ENCODE measurements at regions of chr4 and their contacts with region 1.

Region 1: GRCh38 chr4:38759113-38759789 is 23.5 kb downstream of the TLR10 start:
- DNase-seq: peak; percentile 15 to 79
- H3K4me3 ChIP-seq: no peak overlapping the region
- H3K27ac ChIP-seq: no peak overlapping the region
- H3K4me1 ChIP-seq: no peaks in the 10 kb centered on the region
- H3K27me3 ChIP-seq: no peaks in the 10 kb centered on the region
- CTCF ChIP-seq: peak; percentile 49 to 74 (median 70)
- EP300 ChIP-seq: no peak
- POLR2A ChIP-seq: no peak
- RAD21 ChIP-seq: peak; percentile 84 to 87

Region 2: GRCh38 chr4:38743866-38744265 is 15.4 kb before region 1 on chr4:
- CTCF ChIA-PET with region 1: interaction called, 10 read pairs
- POLR2A ChIA-PET with region 1: no interaction called
- DNase-seq: no peak
- H3K4me3 ChIP-seq: no peak overlapping the region
- H3K27ac ChIP-seq: no peak overlapping the region
- H3K4me1 ChIP-seq: no peaks in the 10 kb centered on the region
- H3K27me3 ChIP-seq: no peaks in the 10 kb centered on the region
- CTCF ChIP-seq: no peak
- EP300 ChIP-seq: no peak
- POLR2A ChIP-seq: no peak
- RAD21 ChIP-seq: no peak

Region 3: GRCh38 chr4:38774181-38774955 is 15.1 kb after region 1 on chr4:
- CTCF ChIA-PET with region 1: interaction called, 136 read pairs
- POLR2A ChIA-PET with region 1: interaction called, 4 read pairs
- DNase-seq: no peak
- H3K4me3 ChIP-seq: no peak overlapping the region
- H3K27ac ChIP-seq: no peak overlapping the region
- H3K4me1 ChIP-seq: no peaks in the 10 kb centered on the region
- H3K27me3 ChIP-seq: no peaks in the 10 kb centered on the region
- CTCF ChIP-seq: no peak
- EP300 ChIP-seq: no peak
- POLR2A ChIP-seq: no peak
- RAD21 ChIP-seq: no peak

Region 4: GRCh38 chr4:38782452-38783108 is 23.3 kb after region 1 on chr4 and contains the start of gene TLR10:
- CTCF ChIA-PET with region 1: interaction called, 136 read pairs
- POLR2A ChIA-PET with region 1: no interaction called
- DNase-seq: no peak
- H3K4me3 ChIP-seq: no peak within 1 kb of the TSS
- H3K27ac ChIP-seq: no peak within 1 kb of the TSS
- H3K4me1 ChIP-seq: no peaks in the 10 kb centered on the region
- H3K27me3 ChIP-seq: no peaks in the 10 kb centered on the region
- CTCF ChIP-seq: peak; percentile 3 to 56 (median 49); a peak in 3 of 4 replicates
- EP300 ChIP-seq: no peak
- POLR2A ChIP-seq: no peak
- RAD21 ChIP-seq: peak; percentile 54 to 59
- total RNA-seq, gene TLR10: not detected in 2 replicates

Region 5: DNA sequence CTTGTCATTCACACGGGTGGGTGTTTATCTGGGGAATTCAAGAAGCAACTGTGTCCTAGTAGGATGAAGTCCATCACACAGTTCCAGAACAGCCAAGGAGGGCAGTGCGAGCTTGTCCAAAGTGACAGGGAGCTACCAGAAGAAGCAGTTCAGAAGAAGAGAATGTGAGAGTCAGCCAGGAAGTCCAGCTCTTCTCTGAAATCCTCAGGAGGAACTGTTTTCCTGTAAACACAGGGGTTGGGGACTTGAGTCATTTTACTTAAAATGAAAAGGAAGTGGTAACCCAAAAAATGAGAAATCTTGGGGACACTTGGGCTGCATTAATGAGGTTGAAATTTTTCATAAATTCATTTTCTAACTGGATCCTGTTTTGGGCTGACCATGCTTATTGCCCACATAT is 31.8 kb after region 1 on chr4:
- CTCF ChIA-PET with region 1: interaction called, 136 read pairs
- POLR2A ChIA-PET with region 1: no interaction called
- DNase-seq: no peak
- H3K4me3 ChIP-seq: no peak overlapping the region
- H3K27ac ChIP-seq: no peak overlapping the region
- H3K4me1 ChIP-seq: no peaks in the 10 kb centered on the region
- H3K27me3 ChIP-seq: no peaks in the 10 kb centered on the region
- CTCF ChIP-seq: no peak
- EP300 ChIP-seq: no peak
- POLR2A ChIP-seq: no peak
- RAD21 ChIP-seq: no peak

Region 6: DNA sequence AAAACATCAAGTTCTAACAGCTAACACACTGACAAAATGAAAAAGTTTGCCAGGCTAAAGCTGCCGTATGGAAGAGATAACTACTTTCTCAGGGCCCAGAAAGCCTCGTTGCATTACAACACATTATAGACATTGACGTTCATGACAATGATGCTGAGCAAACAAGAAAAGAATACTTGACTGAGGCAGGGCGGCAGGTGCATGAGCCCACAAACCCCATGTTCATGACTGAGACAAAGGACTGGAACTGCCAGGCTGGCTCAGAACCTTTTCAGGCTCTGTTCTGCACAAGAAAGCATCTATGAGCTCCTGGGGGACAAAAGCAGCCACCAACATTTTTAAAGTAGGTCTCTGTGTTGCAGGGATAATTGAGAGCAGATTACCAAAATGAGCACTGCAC is 83.7 kb after region 1 on chr4:
- CTCF ChIA-PET with region 1: interaction called, 11 read pairs
- POLR2A ChIA-PET with region 1: no interaction called
- DNase-seq: no peak
- H3K4me3 ChIP-seq: no peak overlapping the region
- H3K27ac ChIP-seq: no peak overlapping the region
- H3K4me1 ChIP-seq: peaks cover 0 to 3% (median 0%) of the 10 kb centered on the region in 4 experiments; a peak in 1 of 7 replicates
- H3K27me3 ChIP-seq: no peaks in the 10 kb centered on the region
- CTCF ChIP-seq: no peak
- EP300 ChIP-seq: no peak
- POLR2A ChIP-seq: no peak
- RAD21 ChIP-seq: no peak

Region 7: DNA sequence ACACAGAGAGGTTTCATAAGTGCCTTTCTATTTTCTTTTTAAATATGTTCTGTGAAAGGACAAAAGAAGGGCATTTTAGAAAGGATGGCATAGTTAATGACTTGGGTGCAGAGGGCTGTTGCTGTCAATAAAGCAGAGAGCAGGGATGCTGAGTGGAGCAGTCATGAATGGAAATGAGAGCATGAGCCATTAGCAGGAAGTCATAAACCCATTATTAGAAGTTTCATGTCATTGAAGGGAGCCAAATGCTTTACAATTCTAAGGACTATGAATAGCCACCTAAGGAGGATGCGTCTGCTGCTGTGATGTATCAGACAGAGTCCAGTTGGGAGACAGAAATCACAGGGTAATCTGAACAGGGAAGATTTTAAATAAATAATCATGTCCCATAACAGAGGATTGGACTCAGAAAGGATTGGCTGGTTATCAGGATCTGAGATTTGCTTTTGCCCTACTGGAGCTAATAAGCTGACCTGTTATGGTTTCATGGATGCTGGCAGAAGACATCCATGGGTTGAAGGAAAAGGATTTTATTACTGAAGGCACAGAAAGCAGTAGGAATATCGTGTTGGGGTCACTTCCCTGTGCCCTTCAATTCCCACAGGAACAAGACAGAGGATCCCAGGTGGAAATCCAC is 375.6 kb after region 1 on chr4:
- CTCF ChIA-PET with region 1: interaction called, 23 read pairs
- POLR2A ChIA-PET with region 1: no interaction called
- DNase-seq: no peak
- H3K4me3 ChIP-seq: no peak overlapping the region
- H3K27ac ChIP-seq: no peak overlapping the region
- H3K4me1 ChIP-seq: peaks cover 0 to 3% (median 0%) of the 10 kb centered on the region in 4 experiments; a peak in 1 of 7 replicates
- H3K27me3 ChIP-seq: no peaks in the 10 kb centered on the region
- CTCF ChIP-seq: no peak
- EP300 ChIP-seq: no peak
- POLR2A ChIP-seq: no peak
- RAD21 ChIP-seq: no peak

Measured in H1 (cell line).